ENCODE measurements at regions of chr9 and their contacts with region 1.

Region 1: GRCh38 chr9:6024020-6024554 is 8.7 kb upstream of the RANBP6 start:
- DNase-seq: peak; percentile 22
- H3K4me3 ChIP-seq: peak overlapping the region in 1 of 3 experiments; percentile 11
- H3K27ac ChIP-seq: no peak overlapping the region
- H3K4me1 ChIP-seq: no peaks in the 10 kb centered on the region
- H3K27me3 ChIP-seq: peaks cover 1 to 13% of the 10 kb centered on the region in 2 experiments
- CTCF ChIP-seq: peak; percentile 46 to 48
- POLR2A ChIP-seq: no peak

Region 2: GRCh38 chr9:5805478-5805877 is 218.6 kb before region 1 on chr9:
- CTCF ChIA-PET with region 1: no interaction called
- POLR2A ChIA-PET with region 1: no interaction called
- dilution Hi-C with region 1: no loop called
- intact Hi-C with region 1: no loop called
- DNase-seq: no peak
- H3K4me3 ChIP-seq: no peak overlapping the region
- H3K27ac ChIP-seq: no peak overlapping the region
- H3K4me1 ChIP-seq: no peaks in the 10 kb centered on the region
- H3K27me3 ChIP-seq: no peaks in the 10 kb centered on the region
- CTCF ChIP-seq: no peak
- POLR2A ChIP-seq: no peak

Region 3: DNA sequence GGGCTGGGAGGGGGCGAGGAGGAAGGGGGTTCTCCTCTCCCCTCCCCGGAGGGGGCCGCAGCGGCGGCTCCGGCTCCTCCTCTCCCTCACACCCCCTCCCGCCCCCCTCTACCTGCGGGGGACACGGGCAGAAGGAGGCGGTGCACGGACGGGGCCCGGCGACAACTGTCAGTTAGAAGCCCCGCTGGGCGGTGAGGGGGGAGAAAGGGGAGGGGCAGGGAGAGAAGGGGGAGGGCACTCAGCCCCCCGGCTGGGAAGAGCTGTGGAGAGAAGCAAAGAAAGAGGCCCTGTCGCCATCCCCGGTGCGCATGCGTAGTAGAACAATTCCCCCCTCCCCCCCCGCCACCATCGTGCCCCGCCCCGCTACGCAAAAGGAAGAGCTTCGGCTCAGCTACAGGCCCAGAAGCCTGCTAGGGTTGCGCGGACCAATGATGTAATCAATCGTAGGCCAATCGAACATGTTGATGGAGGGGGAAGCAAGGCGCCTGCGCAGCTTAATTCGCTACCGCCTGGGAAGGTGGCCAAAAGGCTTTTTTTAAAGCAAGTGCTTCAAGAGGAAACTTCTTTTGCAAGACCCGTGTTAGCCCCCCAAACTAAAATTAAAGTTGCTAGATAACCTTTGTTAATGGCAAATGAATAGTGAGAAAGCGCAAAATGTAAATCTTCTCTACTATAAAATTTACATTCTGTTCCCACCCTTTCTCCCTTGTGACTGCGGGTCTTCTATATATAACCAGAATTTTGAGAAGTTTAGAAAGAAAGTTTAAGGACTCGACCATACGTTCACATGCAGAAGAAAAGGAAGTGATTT is 15.7 kb before region 1 on chr9:
- CTCF ChIA-PET with region 1: interaction called, 14 read pairs
- POLR2A ChIA-PET with region 1: interaction called, 10 read pairs
- dilution Hi-C with region 1: no loop called
- intact Hi-C with region 1: no loop called
- DNase-seq: peak; percentile 98
- H3K4me3 ChIP-seq: peak overlapping the region; percentile 65 to 98 (median 89)
- H3K27ac ChIP-seq: peak overlapping the region; percentile 60
- H3K4me1 ChIP-seq: peaks cover 22% of the 10 kb centered on the region
- H3K27me3 ChIP-seq: no peaks in the 10 kb centered on the region
- CTCF ChIP-seq: no peak
- POLR2A ChIP-seq: peak; percentile 50

Region 4: DNA sequence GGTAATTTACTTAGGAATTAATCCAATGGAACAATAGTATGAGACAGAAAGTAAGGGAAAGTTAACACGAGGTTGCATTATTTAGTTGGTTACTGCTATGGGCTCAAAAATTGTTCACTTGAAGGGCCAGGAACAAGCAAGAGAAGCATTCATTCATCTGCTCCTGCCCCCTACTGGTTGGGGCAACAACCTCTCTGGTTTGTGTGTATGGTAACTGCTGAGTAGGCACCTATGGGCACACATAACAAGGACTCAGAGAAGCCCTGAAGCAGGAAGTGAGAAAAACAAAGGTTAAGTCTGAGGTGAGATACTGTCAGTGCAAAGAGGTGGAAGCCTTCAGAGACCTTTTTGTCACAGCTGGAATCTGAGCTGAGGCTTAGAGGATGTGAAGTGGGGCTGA is 25.7 kb after region 1 on chr9:
- CTCF ChIA-PET with region 1: interaction called, 19 read pairs
- POLR2A ChIA-PET with region 1: no interaction called
- dilution Hi-C with region 1: no loop called
- intact Hi-C with region 1: no loop called
- DNase-seq: peak; percentile 21
- H3K4me3 ChIP-seq: no peak overlapping the region
- H3K27ac ChIP-seq: no peak overlapping the region
- H3K4me1 ChIP-seq: no peaks in the 10 kb centered on the region
- H3K27me3 ChIP-seq: peaks cover 2 to 9% of the 10 kb centered on the region in 2 experiments
- CTCF ChIP-seq: peak; percentile 22 to 33
- POLR2A ChIP-seq: no peak